Activated CD4-positive, alpha-beta memory T cell treated with anti-CD3 and anti-CD28 coated beads, Interleukin-2, amount 10 ng/mL, durations not matched to agents 7 days and 5 days (primary cell): ENCODE measurements at regions of chr1 and their contacts with region 1.

Region 1: GRCh38 chr1:26284597-26285360 is 4.9 kb downstream of the SH3BGRL3 start:
- DNase-seq: peak; percentile 97
- H3K4me3 Mint-ChIP-seq: peak overlapping the region; percentile 82
- H3K27ac Mint-ChIP-seq: peak overlapping the region; percentile 98
- H3K4me1 Mint-ChIP-seq: peaks cover 91% of the 10 kb centered on the region
- H3K27me3 Mint-ChIP-seq: no peaks in the 10 kb centered on the region

Region 2: DNA sequence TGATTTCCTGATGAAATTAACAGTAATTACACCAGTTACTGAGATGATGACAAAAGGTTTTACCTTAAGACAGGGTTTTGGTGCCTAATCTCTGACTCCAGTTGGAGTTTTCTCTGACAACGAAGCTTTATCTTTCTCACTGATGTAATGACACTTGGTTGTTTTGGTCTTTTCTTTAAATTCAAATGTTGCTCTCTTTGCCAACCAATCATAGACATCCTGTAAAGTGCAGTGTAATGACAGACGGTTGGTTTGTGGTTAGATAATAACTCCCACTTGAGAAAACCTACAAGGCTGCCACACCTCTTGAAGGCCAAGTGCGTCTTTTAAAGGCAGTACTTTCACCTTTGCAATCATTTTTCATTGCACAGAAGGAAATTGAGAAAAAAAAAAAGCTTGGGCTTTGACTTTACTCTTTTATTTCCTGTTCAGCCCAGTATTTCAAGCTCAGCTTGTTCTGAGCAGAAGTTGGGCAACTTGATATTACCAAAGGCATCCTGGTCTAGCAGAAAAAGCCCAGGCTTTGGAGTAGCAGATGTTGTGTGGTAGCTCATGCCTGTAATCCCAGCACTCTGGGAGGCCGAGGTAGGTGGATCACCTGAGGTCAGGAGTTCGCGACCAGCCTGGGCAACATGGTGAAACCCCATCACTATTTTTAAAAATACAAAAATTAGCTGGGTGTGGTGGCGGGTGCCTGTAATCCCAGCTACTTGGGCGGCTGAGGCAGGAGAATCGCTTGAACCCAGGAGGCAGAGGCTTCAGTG is 158.3 kb before region 1 on chr1:
- CTCF ChIA-PET with region 1: interaction called, 6 read pairs
- POLR2A ChIA-PET with region 1: interaction called, 25 read pairs
- DNase-seq: peak; percentile 69
- H3K4me3 Mint-ChIP-seq: peak overlapping the region; percentile 73
- H3K27ac Mint-ChIP-seq: peak overlapping the region; percentile 81
- H3K4me1 Mint-ChIP-seq: peaks cover 74% of the 10 kb centered on the region
- H3K27me3 Mint-ChIP-seq: peaks cover 3% of the 10 kb centered on the region

Region 3: GRCh38 chr1:26297057-26297790 is 12.4 kb after region 1 on chr1:
- CTCF ChIA-PET with region 1: interaction called, 13 read pairs
- POLR2A ChIA-PET with region 1: interaction called, 1,302 read pairs
- DNase-seq: no peak
- H3K4me3 Mint-ChIP-seq: no peak overlapping the region
- H3K27ac Mint-ChIP-seq: no peak overlapping the region
- H3K4me1 Mint-ChIP-seq: peaks cover 13% of the 10 kb centered on the region
- H3K27me3 Mint-ChIP-seq: no peaks in the 10 kb centered on the region

Region 4: DNA sequence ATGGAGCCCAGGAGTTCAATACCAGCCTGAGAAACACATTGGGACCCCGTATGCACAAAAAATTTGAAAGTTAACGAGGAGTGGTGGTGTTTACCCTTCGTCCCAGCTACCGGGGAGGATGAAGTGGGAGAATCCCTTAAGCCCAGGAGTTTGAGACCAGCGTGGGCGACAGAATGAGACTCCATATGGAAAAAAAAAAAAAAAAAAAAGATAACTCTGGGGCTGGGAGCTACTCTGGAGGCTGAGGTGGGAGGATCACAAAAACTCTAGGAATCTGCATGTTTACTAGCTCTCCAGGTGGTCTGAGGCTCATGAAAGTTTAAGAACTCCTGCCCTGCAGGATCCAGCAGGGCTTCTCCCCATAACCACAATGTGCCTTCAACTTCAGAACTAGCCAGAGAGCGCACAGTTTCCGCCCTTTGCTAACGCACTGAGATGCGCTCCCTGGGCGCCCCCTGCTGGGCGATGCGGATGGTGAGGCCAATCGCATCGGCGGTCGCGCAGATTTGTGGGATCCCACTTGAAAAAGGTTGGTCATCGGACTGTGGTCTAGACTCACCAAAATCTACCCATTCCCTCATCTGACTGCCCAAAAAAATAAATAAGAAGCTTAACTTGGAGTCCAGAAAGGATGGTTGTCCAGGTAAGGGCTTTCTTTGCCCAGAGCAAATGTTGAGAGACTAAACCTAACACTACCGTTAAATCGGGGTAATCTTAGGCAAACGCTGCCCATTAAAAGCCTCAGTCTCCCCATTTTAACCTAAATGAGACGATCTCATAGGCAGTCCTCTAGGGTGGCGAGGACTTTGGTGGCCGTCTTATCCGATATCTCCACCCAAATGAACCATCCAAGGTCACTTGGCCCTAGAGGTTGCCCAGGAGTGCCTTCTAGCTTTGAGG is 79.0 kb after region 1 on chr1:
- CTCF ChIA-PET with region 1: interaction called, 67 read pairs
- POLR2A ChIA-PET with region 1: interaction called, 28 read pairs
- DNase-seq: peak; percentile 88
- H3K4me3 Mint-ChIP-seq: no peak overlapping the region
- H3K27ac Mint-ChIP-seq: no peak overlapping the region
- H3K4me1 Mint-ChIP-seq: peaks cover 49% of the 10 kb centered on the region
- H3K27me3 Mint-ChIP-seq: peaks cover 23% of the 10 kb centered on the region

Region 5: GRCh38 chr1:26378088-26378878 is 93.5 kb after region 1 on chr1:
- CTCF ChIA-PET with region 1: interaction called, 22 read pairs
- POLR2A ChIA-PET with region 1: interaction called, 32 read pairs
- DNase-seq: peak; percentile 89
- H3K4me3 Mint-ChIP-seq: peak overlapping the region; percentile 52
- H3K27ac Mint-ChIP-seq: peak overlapping the region; percentile 91
- H3K4me1 Mint-ChIP-seq: peaks cover 75% of the 10 kb centered on the region
- H3K27me3 Mint-ChIP-seq: no peaks in the 10 kb centered on the region

Region 6: GRCh38 chr1:26472901-26473845 is 188.4 kb after region 1 on chr1:
- CTCF ChIA-PET with region 1: interaction called, 3 read pairs
- POLR2A ChIA-PET with region 1: interaction called, 14 read pairs
- DNase-seq: peak; percentile 97
- H3K4me3 Mint-ChIP-seq: peak overlapping the region; percentile 90
- H3K27ac Mint-ChIP-seq: peak overlapping the region; percentile 66
- H3K4me1 Mint-ChIP-seq: peaks cover 52% of the 10 kb centered on the region
- H3K27me3 Mint-ChIP-seq: no peaks in the 10 kb centered on the region